Aorta (tissue), 5 donors: ENCODE measurements at regions of chr19 and their contacts with region 1.

Region 1: GRCh38 chr19:52897144-52897935 is at the start of gene ZNF320:
- DNase-seq: peak; percentile 97 to 99
- ATAC-seq: peak; percentile 100
- H3K4me3 ChIP-seq: peak within 1 kb of the TSS; percentile 44 to 71
- H3K27ac ChIP-seq: peak within 1 kb of the TSS; percentile 53 to 55
- H3K4me1 ChIP-seq: no peaks in the 10 kb centered on the region
- H3K27me3 ChIP-seq: no peaks in the 10 kb centered on the region
- total RNA-seq, gene ZNF320: 6.6 to 11.7 TPM

Region 2: DNA sequence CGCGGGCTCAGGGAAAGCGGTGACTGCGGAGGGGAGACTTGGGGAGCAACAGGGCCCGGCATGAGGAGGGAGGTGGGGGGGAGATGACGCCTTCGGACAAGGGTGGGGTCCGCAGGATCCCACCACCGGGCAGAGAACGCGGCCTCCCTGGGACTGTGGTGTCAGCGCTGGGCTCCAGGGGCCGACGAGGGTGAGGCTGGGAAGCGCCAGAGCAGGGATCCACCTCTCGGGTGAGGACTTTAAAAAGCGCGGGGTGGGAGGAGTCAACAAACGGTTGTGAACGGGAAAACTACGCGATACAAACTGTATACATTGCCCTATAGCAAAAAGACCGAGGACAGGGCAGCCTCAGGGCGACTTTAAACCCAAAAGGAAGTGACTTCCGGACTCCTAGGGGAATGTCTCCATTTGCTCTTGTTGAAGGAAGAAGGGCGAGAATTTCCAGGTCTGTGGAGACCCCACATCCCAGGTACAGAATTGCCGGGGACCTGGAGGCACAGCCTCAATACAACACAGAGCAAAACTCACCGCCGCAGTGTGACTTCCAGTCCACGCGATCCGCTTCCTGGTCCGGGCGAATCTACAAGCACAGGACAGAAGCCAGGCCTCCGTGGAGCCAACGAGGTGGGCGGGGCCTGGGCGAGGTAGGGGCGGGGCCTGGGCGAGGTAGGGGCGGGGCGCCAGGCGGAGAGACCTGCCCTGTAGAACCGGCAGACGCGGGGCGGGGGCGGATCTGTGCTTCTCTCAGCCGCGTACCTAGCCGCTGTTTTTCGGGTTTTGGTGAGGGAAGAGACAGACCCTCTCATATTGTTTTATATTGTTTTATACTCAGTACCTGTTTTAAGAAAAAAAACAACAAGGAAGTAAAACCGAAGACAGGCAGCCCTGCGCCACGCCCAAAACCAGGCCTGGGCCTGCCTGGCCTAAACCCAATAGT is 25.8 kb after region 1 on chr19 and contains the start of gene ZNF888:
- intact Hi-C with region 1: loop called in 1 of 2 experiments (anchors 2 kb)
- DNase-seq: peak; percentile 90 to 96
- ATAC-seq: peak; percentile 99
- H3K4me3 ChIP-seq: peak within 1 kb of the TSS; percentile 58 to 67
- H3K27ac ChIP-seq: peak within 1 kb of the TSS; percentile 45 to 92
- H3K4me1 ChIP-seq: no peaks in the 10 kb centered on the region
- H3K27me3 ChIP-seq: no peaks in the 10 kb centered on the region
- total RNA-seq, gene ZNF888: 4.2 to 5.0 TPM

Region 3: DNA sequence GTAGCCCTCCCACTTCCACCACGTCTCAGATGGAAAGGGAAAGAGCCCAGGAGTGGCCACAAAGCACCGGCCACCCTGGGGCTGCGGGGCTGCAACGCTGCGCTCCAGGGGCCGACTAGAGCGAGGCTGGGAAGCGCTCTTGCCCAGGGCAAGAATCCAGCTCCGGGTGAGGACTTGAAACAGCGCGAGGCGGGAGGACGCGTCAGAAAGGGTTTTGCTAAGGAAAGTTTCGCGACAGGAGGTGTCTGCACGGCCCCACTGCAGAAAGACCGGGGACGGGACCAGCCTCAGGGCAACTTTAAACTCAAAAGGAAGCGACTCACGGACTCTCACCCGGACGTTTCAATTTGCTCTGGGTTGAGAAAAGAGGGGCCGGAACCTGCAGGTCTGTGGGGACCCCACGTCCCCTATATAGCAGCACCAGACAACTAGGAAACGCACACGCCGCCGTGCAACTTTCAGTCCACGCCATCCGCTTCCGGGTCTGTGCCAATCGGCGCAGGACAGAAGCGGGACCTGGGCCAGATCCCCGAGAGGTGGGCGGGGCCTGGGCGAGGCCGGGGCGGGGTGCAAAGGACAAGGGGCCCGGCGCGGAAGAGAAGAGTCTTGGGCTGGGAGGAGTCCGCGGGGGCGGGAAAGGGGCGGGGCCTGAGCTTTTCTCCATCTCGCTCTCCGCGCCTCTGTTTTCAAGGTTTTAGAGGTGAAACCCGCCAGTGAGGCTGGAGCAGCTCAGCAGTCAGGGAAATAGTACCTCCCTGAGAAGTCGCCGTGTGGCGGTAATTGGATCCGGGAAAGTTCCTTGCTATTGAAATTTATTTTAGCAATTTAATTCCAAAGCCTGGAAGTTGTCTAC is 65.3 kb after region 1 on chr19 and contains the start of gene ZNF816:
- intact Hi-C with region 1: loop called in 1 of 2 experiments (anchors 10 kb)
- DNase-seq: peak; percentile 99 to 100
- ATAC-seq: peak; percentile 100
- H3K4me3 ChIP-seq: peak within 1 kb of the TSS; percentile 70 to 80
- H3K27ac ChIP-seq: peak within 1 kb of the TSS; percentile 84 to 94
- H3K4me1 ChIP-seq: peaks cover 0 to 3% of the 10 kb centered on the region in 2 donors
- H3K27me3 ChIP-seq: no peaks in the 10 kb centered on the region
- total RNA-seq, gene ZNF816: 5.4 to 11.4 TPM